ENCODE measurements at regions of chr3 and their contacts with region 1.

Region 1: GRCh38 chr3:186570096-186570940 is at the start of gene DNAJB11:
- DNase-seq: peak; percentile 99
- ATAC-seq: peak; percentile 89
- H3K4me3 ChIP-seq: peak within 1 kb of the TSS; percentile 86 to 100 (median 93)
- H3K27ac ChIP-seq: peak within 1 kb of the TSS; percentile 86
- H3K4me1 ChIP-seq: peaks cover 61% of the 10 kb centered on the region
- H3K27me3 ChIP-seq: no peaks in the 10 kb centered on the region; a peak in 1 of 5 replicates
- CTCF ChIP-seq: peak; percentile 37; the same call in 1 of the 2 replicates
- EP300 ChIP-seq: peak; percentile 23 to 70; a peak in 2 of 4 replicates
- POLR2A ChIP-seq: peak; percentile 87 to 98
- RAD21 ChIP-seq: peak; percentile 56
- total RNA-seq, gene DNAJB11: 62.5 and 132 TPM in 2 replicates

Region 2: GRCh38 chr3:186583831-186584230 is 13.5 kb after region 1 on chr3:
- CTCF ChIA-PET with region 1: no interaction called
- POLR2A ChIA-PET with region 1: interaction called, 17 read pairs
- in situ Hi-C with region 1: no loop called
- intact Hi-C with region 1: no loop called
- DNase-seq: no peak
- ATAC-seq: no peak
- H3K4me3 ChIP-seq: no peak overlapping the region
- H3K27ac ChIP-seq: no peak overlapping the region
- H3K4me1 ChIP-seq: peaks cover 7% of the 10 kb centered on the region
- H3K27me3 ChIP-seq: no peaks in the 10 kb centered on the region
- CTCF ChIP-seq: no peak
- EP300 ChIP-seq: no peak
- POLR2A ChIP-seq: no peak
- RAD21 ChIP-seq: no peak

Region 3: DNA sequence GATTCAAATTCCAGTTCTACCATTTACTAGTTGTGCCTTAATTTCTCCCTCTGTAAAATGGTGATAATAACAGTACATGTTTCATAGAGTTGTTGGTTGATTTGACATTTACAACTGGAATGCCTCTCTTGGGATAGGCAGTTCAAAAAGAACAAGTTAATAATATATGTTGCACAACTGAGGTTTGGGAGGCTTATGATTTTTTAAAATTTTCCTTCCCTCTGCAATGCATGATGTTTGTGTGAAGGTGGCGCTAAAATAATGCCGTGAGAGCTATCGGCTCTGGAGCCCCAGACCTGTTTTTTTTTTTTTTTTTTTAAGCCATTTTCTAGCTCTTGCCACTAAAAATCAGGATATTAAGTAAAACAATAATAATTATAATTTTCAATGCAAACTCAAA is 18.8 kb after region 1 on chr3:
- CTCF ChIA-PET with region 1: no interaction called
- POLR2A ChIA-PET with region 1: interaction called, 17 read pairs
- in situ Hi-C with region 1: no loop called
- intact Hi-C with region 1: no loop called
- DNase-seq: peak; percentile 60
- ATAC-seq: peak; percentile 42
- H3K4me3 ChIP-seq: no peak overlapping the region; a peak in 1 of 6 replicates
- H3K27ac ChIP-seq: peak overlapping the region; percentile 66
- H3K4me1 ChIP-seq: peaks cover 59% of the 10 kb centered on the region
- H3K27me3 ChIP-seq: no peaks in the 10 kb centered on the region
- CTCF ChIP-seq: peak; percentile 66
- EP300 ChIP-seq: no peak
- POLR2A ChIP-seq: no peak
- RAD21 ChIP-seq: peak; percentile 42; the same call in 1 of the 2 replicates

Region 4: DNA sequence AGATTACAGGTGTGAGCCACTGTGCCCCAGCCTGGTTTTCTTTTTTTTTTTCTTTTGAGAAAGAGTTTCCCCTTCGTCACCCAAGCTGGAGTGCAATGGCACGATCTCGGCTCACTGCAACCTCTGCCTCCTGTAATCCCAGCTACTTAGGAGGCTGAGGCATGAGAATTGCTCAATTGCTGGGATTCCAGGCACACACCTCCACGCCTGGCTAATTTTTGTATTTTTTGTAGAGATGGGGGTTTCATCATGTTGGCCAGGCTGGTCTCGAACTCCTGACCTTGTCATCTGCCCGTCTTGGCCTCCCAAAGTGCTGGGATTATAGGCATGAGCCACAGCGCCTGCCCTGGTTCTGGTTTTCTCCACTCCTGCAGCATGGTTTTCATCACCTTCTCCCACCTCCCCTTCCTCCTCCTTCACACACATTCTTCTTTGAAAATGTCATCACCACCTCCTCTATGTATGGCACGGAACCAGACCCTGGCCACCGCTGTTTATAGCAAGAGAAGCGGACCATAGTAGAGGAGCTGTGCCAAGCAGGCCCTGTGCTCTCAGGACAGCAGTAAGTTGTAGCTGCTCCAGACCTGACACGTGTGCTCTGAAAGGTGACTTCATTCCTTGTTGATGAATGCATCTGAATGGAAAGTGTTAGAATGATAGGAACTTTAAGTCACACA is 27.9 kb after region 1 on chr3:
- CTCF ChIA-PET with region 1: no interaction called
- POLR2A ChIA-PET with region 1: interaction called, 51 read pairs
- in situ Hi-C with region 1: no loop called
- intact Hi-C with region 1: no loop called
- DNase-seq: peak; percentile 68
- ATAC-seq: peak; percentile 38
- H3K4me3 ChIP-seq: peak overlapping the region in 1 of 3 experiments; percentile 63; a peak in 2 of 6 replicates
- H3K27ac ChIP-seq: peak overlapping the region; percentile 95
- H3K4me1 ChIP-seq: peaks cover 96% of the 10 kb centered on the region
- H3K27me3 ChIP-seq: no peaks in the 10 kb centered on the region
- CTCF ChIP-seq: no peak
- EP300 ChIP-seq: no peak
- POLR2A ChIP-seq: no peak
- RAD21 ChIP-seq: no peak

Region 5: DNA sequence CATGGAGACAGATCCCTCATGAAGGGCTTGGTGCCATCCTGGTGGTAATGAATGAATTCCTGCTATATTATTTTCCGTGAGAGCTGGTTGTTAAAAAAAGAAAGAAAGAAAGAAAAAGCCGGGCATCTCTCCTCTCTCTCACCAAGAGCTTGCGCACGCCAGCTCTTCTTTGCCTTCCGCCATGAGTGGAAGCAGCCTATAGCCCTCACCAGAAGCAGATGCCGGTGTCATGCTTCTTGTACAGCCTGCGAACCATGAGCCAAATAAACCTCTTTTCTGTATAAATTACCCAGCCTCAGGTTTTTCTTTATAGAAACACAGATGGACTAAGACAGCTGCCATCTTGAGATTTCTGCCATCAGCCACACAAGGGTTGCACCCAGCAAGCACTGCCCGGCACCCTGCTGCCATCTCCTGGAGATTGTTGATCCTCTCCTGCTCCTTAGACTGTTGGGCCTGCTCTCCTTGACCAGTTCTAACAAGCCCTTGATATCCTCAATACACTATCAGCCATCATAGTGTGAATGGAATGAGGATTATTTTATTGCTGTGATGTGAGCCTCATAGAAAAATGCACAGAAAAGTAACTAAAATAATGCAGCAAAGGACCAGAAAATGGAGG is 39.0 kb after region 1 on chr3:
- CTCF ChIA-PET with region 1: no interaction called
- POLR2A ChIA-PET with region 1: interaction called, 111 read pairs
- in situ Hi-C with region 1: no loop called
- intact Hi-C with region 1: loop called (anchors 2 kb)
- DNase-seq: no peak
- ATAC-seq: no peak
- H3K4me3 ChIP-seq: no peak overlapping the region
- H3K27ac ChIP-seq: peak overlapping the region; percentile 52
- H3K4me1 ChIP-seq: peaks cover 97% of the 10 kb centered on the region
- H3K27me3 ChIP-seq: no peaks in the 10 kb centered on the region; a peak in 1 of 5 replicates
- CTCF ChIP-seq: peak; percentile 61
- EP300 ChIP-seq: no peak
- POLR2A ChIP-seq: no peak
- RAD21 ChIP-seq: 0 out of 2 replicates have a peak, but pooled peaks have one; percentile 17